ENCODE measurements at regions of chr17 and their contacts with region 1.

Region 1: DNA sequence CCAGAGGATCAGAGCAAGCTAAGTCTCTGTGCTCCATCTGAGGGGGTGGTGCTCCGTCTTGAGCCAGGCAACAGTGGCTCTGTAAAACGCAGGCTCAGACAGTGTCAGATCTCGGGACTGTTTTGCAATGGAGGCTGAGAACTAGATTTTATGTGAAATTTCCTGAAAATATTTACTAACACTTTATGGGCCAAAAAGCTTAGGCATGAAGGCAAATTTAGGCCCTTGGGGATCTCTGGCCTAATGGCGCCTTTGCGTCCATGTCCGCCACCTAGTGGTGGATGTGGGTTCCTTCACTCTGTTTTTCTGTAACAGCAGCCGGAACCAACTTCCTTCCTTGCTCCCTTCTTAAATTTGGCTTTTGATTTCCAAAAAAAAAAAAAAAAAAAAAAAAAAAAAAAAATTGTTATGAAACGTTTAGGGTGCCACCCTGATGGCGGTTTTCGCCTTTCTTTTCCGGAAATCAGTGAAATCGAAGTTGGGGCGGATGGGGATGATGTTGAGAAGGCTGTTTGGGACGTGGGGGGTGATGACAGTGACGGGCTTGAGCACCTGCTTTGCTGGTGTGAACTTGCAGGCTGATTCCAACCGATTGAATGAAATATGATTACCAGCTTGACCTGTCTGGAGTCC is 14.0 kb upstream of the ELAC2 start:
- DNase-seq: peak; percentile 15
- H3K4me3 Mint-ChIP-seq: no peak overlapping the region
- H3K27ac Mint-ChIP-seq: no peak overlapping the region
- H3K4me1 Mint-ChIP-seq: peaks cover 9% of the 10 kb centered on the region
- H3K27me3 Mint-ChIP-seq: no peaks in the 10 kb centered on the region

Region 2: GRCh38 chr17:12180644-12181261 is 851.1 kb before region 1 on chr17:
- intact Hi-C with region 1: loop called (anchors 2 kb)
- DNase-seq: no peak
- H3K4me3 Mint-ChIP-seq: no peak overlapping the region
- H3K27ac Mint-ChIP-seq: no peak overlapping the region
- H3K4me1 Mint-ChIP-seq: no peaks in the 10 kb centered on the region
- H3K27me3 Mint-ChIP-seq: no peaks in the 10 kb centered on the region

Region 3: GRCh38 chr17:12730931-12731521 is 300.8 kb before region 1 on chr17:
- intact Hi-C with region 1: no loop called
- DNase-seq: no peak
- H3K4me3 Mint-ChIP-seq: no peak overlapping the region
- H3K27ac Mint-ChIP-seq: no peak overlapping the region
- H3K4me1 Mint-ChIP-seq: no peaks in the 10 kb centered on the region
- H3K27me3 Mint-ChIP-seq: no peaks in the 10 kb centered on the region

Region 4: DNA sequence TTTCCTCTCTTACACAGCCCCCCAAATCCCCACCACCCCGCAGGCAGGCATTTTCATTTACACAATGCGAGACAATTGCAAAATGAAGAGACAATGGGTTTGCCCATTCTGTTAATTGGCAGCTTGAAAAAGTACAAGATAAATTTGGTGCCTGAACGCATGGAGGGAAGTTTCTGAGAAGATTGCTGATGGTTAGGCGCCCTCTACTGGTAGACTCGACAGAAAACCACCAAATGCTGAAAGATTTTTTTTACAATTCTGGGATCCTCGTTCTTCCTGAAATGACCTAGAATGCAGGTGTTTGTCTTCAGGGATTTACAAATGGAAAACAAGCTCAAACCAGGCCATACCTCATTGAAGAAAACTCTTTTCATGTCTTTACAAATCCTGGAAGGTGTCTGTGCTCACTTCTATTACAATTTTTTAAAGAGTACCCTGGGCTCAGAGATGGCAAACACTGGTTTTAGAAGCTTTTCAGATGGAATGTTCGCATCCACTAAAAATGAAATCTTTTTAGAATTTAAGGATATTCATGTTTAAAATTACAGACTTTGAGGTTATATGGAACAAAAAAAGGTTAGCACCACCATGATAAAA is 1894.8 kb after region 1 on chr17:
- intact Hi-C with region 1: loop called (anchors 5 kb)
- DNase-seq: peak; percentile 31
- H3K4me3 Mint-ChIP-seq: no peak overlapping the region
- H3K27ac Mint-ChIP-seq: no peak overlapping the region
- H3K4me1 Mint-ChIP-seq: no peaks in the 10 kb centered on the region
- H3K27me3 Mint-ChIP-seq: no peaks in the 10 kb centered on the region